AG04450 (cell line): ENCODE measurements at regions of chr11 and their contacts with region 1.

Region 1: DNA sequence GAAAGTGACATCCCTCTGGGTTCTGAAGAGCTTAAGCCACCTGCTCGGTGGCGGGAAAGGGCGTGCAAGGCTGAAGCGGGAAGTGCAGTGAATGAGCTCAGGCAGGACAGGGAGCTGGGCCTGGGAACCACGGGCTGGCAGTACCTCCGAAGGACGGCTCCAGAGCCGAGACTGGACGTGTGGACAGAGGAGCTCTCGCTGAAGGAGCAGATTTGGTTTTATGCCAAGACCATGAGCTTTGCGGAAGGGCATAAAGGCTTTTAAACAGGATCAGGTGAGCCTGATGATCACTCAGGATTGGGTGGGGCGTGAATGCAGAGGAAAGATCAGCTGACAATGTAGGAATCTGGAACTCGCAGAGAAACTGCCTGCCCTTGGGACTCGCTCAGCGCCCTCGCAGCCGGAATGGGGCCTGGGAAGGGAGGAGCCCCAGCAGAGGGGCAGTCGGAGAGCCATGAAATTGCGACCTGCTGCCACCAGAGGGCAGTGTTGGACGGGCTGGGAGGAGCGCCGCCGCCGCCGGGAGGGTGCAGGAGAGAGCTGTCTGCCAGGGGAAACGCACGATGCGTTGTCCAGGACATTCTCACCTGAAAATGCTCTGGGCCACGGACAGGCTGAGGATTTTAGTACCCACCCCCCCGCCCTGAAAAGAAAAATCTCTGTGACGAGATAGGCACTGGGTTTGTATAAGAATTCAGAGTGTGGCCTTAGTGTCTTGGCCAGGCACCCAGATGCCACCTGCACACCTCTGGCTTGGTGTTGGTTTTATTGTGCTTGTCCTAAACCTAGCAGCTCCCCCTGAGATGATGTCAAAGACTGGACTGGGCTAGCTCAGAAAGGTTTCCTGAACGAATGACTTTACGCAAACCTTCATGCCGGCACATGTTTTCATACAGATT is 324.4 kb downstream of the NTM start:
- DNase-seq: peak; percentile 44
- H3K4me3 ChIP-seq: peak overlapping the region; percentile 17; the same call in 1 of the 2 replicates
- H3K27ac ChIP-seq: no peak overlapping the region
- H3K27me3 ChIP-seq: no peaks in the 10 kb centered on the region
- CTCF ChIP-seq: peak; percentile 95

Region 2: DNA sequence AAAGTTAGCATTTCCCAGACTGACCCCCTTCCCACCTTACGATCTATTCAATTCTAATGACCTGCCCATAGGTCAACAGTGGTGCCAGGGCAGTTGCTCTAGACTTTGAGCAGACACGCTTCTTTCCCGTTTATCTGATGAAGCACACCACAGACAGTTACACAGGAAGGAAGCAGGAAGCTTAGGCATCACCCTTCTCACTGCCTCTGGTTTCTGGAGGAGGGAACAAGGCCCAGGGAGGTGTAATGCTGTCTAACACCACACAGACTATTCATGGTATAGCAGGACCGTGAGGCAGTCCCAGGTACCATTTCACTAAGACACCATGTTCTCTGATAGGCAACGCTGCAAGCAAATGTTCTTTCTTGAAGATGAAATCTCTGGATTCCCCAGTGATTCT is 44.9 kb before region 1 on chr11:
- CTCF ChIA-PET with region 1: interaction called, 10 read pairs
- POLR2A ChIA-PET with region 1: no interaction called
- DNase-seq: no peak
- H3K4me3 ChIP-seq: no peak overlapping the region
- H3K27ac ChIP-seq: no peak overlapping the region
- H3K27me3 ChIP-seq: peaks cover 4% of the 10 kb centered on the region
- CTCF ChIP-seq: no peak

Region 3: GRCh38 chr11:131710511-131710910 is 15.7 kb after region 1 on chr11:
- CTCF ChIA-PET with region 1: interaction called, 39 read pairs
- POLR2A ChIA-PET with region 1: no interaction called
- DNase-seq: no peak
- H3K4me3 ChIP-seq: no peak overlapping the region
- H3K27ac ChIP-seq: no peak overlapping the region
- H3K27me3 ChIP-seq: peaks cover 1% of the 10 kb centered on the region
- CTCF ChIP-seq: no peak

Region 4: GRCh38 chr11:131748151-131749050 is 53.6 kb after region 1 on chr11:
- CTCF ChIA-PET with region 1: interaction called, 66 read pairs
- POLR2A ChIA-PET with region 1: no interaction called
- DNase-seq: no peak
- H3K4me3 ChIP-seq: no peak overlapping the region
- H3K27ac ChIP-seq: peak overlapping the region; percentile 77
- H3K27me3 ChIP-seq: no peaks in the 10 kb centered on the region
- CTCF ChIP-seq: peak; percentile 90

Region 5: GRCh38 chr11:131867457-131868257 is 172.9 kb after region 1 on chr11:
- CTCF ChIA-PET with region 1: interaction called, 40 read pairs
- POLR2A ChIA-PET with region 1: no interaction called
- DNase-seq: peak; percentile 81
- H3K4me3 ChIP-seq: no peak overlapping the region
- H3K27ac ChIP-seq: no peak overlapping the region
- H3K27me3 ChIP-seq: no peaks in the 10 kb centered on the region
- CTCF ChIP-seq: peak; percentile 97

Region 6: GRCh38 chr11:132177106-132177505 is 482.3 kb after region 1 on chr11:
- CTCF ChIA-PET with region 1: no interaction called
- POLR2A ChIA-PET with region 1: no interaction called
- DNase-seq: peak; percentile 27
- H3K4me3 ChIP-seq: no peak overlapping the region
- H3K27ac ChIP-seq: no peak overlapping the region
- H3K27me3 ChIP-seq: no peaks in the 10 kb centered on the region
- CTCF ChIP-seq: no peak

Region 7: GRCh38 chr11:132312701-132313111 is 617.9 kb after region 1 on chr11:
- CTCF ChIA-PET with region 1: interaction called, 11 read pairs
- POLR2A ChIA-PET with region 1: no interaction called
- DNase-seq: no peak
- H3K4me3 ChIP-seq: no peak overlapping the region
- H3K27ac ChIP-seq: no peak overlapping the region
- H3K27me3 ChIP-seq: no peaks in the 10 kb centered on the region
- CTCF ChIP-seq: peak; percentile 69

Region 8: DNA sequence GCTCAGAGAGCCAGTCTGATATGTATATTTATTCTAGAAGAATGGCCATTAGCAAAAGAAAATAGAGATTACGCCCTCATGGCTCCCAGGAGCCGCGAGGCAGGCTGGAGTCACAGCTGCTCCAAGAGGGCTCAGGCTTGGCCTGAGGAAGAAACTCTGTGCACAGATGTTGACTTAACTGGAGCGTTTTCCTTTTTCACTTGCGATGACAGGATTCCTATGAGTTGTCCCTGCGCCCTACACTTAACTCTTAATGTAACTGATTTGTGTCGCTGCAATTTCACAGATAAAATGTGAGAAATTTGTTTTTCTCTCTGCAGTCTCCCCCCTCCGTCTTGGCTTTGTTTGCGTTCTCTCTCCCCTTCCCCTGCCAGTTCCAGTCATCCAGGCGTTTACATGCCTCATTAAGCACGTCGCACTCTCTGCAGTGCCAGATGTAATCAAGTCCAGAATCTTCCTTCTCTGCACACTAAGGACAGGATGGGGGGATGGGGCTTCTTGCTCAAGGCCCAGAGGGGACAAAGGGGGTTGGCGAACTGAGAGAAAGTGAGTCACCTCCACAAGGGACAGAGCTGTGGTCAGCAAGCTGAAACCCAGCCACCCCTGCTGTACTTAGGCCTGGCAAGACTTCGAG is 735.8 kb after region 1 on chr11:
- CTCF ChIA-PET with region 1: no interaction called
- POLR2A ChIA-PET with region 1: no interaction called
- DNase-seq: no peak
- H3K4me3 ChIP-seq: no peak overlapping the region
- H3K27ac ChIP-seq: no peak overlapping the region
- H3K27me3 ChIP-seq: no peaks in the 10 kb centered on the region
- CTCF ChIP-seq: no peak